Activated CD4-positive, alpha-beta T cell treated with anti-CD3 and anti-CD28 coated beads for 36 hours (primary cell): ENCODE measurements at regions of chr6 and their contacts with region 1.

Region 1: GRCh38 chr6:3118353-3119039 is at the start of gene BPHL:
- DNase-seq: peak; percentile 100
- ATAC-seq: peak; percentile 90
- H3K4me3 Mint-ChIP-seq: peak within 1 kb of the TSS; percentile 76
- H3K27ac Mint-ChIP-seq: peak within 1 kb of the TSS; percentile 60
- H3K4me1 Mint-ChIP-seq: peaks cover 22% of the 10 kb centered on the region
- H3K27me3 Mint-ChIP-seq: no peaks in the 10 kb centered on the region
- total RNA-seq, gene BPHL: 15.8 to 16.7 TPM

Region 2: DNA sequence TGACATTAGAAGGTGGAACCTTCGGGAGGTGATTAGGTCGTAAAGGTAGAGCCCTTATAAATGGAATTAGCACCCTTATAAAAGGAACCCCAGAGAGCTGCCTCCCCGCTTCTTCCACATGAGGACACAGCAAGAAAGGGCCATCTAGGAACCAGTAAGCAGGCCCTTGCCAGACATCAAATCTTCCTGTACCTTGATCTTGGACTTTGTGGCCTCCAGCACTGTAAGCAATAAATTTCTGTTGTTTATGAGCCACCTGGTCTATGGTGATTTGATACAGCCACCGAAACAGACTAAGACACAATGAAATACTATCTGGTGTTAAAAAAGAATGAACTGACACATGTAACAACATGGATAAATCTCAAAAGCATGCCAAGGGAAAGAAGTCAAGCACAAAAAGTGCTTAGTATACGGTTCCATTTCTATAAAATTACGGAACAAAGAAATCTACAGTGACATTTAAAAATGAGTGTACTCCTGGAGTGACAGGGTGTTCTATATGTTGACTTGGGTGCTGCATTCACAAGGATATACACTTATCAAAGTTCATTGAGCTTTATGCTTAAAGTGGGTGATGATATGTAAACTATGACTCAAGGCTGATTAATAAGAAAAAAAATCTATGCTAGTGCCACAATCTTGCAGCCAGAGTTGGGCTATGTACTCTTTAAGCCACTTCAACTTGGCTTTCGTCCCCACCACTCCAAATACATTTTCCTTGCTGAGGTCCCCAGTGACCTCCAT is 295.2 kb before region 1 on chr6:
- CTCF ChIA-PET with region 1: no interaction called
- POLR2A ChIA-PET with region 1: no interaction called
- intact Hi-C with region 1: no loop called
- DNase-seq: no peak
- ATAC-seq: peak; percentile 43
- H3K4me3 Mint-ChIP-seq: no peak overlapping the region
- H3K27ac Mint-ChIP-seq: no peak overlapping the region
- H3K4me1 Mint-ChIP-seq: peaks cover 29% of the 10 kb centered on the region
- H3K27me3 Mint-ChIP-seq: no peaks in the 10 kb centered on the region

Region 3: DNA sequence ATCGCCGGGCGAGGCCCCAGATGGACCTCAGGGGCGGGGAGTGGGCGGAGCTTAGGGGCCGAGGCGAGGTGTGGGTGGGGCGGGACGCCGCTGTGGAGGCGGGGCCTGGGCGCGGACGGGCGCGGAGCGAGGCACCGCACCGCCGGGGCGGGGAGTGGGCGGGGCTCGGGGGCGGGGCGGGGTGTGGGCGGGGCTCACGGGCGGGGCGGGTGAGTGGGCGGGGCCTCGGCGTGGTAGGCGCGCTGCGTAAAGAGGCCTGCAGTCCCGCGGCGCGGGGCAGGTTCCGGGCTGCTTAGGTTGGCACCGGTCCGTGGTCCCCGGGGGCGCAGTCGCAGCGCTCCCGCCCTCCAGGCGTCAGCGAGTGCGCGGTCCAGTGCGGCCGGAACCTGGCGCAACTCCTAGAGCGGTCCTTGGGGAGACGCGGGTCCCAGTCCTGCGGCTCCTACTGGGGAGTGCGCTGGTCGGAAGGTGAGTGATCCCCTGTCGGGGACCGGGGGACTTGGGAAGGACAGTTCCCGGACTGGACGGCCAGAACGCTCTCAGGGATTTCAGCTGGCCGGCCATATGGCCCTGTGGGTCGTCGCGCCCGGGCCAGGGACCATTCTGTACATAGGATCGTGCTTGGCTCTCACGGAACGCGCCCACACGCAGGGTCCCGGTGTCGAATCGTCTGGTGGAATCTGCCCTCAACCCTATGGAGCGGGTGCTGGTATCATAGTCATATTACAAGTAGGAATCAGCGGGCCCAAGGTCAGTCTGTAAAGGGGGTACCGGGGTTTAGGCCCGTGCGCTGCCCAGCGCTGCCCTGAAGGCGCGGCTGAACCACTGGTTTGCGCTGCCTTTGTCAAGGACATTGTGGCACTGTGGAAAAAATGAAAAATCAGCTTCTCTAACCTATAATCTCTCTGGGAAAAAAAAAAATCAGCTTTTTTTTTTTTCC is 118.6 kb before region 1 on chr6 and contains the start of gene NQO2:
- CTCF ChIA-PET with region 1: interaction called, 4 read pairs
- POLR2A ChIA-PET with region 1: no interaction called
- intact Hi-C with region 1: loop called (anchors 1 kb)
- DNase-seq: peak; percentile 96
- ATAC-seq: peak; percentile 80
- H3K4me3 Mint-ChIP-seq: peak within 1 kb of the TSS; percentile 83
- H3K27ac Mint-ChIP-seq: peak within 1 kb of the TSS; percentile 82
- H3K4me1 Mint-ChIP-seq: peaks cover 28% of the 10 kb centered on the region
- H3K27me3 Mint-ChIP-seq: no peaks in the 10 kb centered on the region
- total RNA-seq, gene NQO2: 40.7 to 44.2 TPM

Region 4: DNA sequence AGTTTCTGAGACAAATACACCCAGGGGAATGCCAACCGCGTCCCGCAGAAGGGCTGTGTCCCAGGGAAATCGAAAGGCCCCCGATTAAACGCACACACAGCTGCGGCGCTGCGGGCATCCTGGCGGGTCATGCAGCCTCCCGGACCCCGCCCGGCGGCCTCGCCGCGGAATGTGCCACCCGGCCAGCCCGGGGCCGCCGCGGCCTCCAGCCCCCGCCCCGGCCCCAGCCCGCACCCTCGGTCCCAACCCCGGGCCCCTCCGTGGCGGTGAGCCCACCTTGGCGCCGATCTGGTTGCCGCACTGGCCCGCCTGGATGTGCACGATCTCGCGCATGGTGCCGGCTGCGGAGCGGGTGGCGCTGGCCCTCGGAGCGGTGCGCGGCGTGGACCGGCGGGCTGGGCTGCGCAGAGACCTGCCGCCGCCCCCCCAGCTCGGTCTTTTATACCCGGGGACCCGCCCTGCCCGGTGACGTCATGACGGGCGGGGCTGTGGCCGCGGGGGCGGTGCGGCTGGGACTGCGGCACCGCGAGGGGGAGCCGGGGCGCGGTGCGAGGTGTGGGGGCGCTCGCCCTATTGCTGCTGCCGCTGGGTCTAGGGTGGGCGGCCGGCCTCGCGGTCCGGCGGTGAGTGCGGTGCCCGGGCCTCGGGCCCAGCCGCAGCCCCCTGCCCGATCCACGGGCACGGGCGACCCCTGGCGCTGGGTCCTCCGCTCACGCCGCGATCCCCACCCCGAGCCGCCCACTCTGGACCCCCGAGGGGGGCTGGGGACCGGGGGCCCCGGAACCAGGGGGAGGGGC is 38.8 kb after region 1 on chr6 and contains the start of gene TUBB2A:
- CTCF ChIA-PET with region 1: interaction called, 3 read pairs
- POLR2A ChIA-PET with region 1: no interaction called
- intact Hi-C with region 1: loop called (anchors 1 to 2 kb)
- DNase-seq: peak; percentile 87
- ATAC-seq: peak; percentile 68
- H3K4me3 Mint-ChIP-seq: peak within 1 kb of the TSS; percentile 74
- H3K27ac Mint-ChIP-seq: peak within 1 kb of the TSS; percentile 55
- H3K4me1 Mint-ChIP-seq: peaks cover 25% of the 10 kb centered on the region
- H3K27me3 Mint-ChIP-seq: peaks cover 20% of the 10 kb centered on the region
- total RNA-seq, gene TUBB2A: 1.7 to 1.8 TPM

Region 5: GRCh38 chr6:3209114-3210023 is 90.9 kb after region 1 on chr6:
- CTCF ChIA-PET with region 1: interaction called, 4 read pairs
- POLR2A ChIA-PET with region 1: interaction called, 7 read pairs
- intact Hi-C with region 1: loop called (anchors 1 kb)
- DNase-seq: peak; percentile 80
- ATAC-seq: peak; percentile 87
- H3K4me3 Mint-ChIP-seq: peak overlapping the region; percentile 32
- H3K27ac Mint-ChIP-seq: peak overlapping the region; percentile 86
- H3K4me1 Mint-ChIP-seq: peaks cover 28% of the 10 kb centered on the region
- H3K27me3 Mint-ChIP-seq: peaks cover 34% of the 10 kb centered on the region

Region 6: DNA sequence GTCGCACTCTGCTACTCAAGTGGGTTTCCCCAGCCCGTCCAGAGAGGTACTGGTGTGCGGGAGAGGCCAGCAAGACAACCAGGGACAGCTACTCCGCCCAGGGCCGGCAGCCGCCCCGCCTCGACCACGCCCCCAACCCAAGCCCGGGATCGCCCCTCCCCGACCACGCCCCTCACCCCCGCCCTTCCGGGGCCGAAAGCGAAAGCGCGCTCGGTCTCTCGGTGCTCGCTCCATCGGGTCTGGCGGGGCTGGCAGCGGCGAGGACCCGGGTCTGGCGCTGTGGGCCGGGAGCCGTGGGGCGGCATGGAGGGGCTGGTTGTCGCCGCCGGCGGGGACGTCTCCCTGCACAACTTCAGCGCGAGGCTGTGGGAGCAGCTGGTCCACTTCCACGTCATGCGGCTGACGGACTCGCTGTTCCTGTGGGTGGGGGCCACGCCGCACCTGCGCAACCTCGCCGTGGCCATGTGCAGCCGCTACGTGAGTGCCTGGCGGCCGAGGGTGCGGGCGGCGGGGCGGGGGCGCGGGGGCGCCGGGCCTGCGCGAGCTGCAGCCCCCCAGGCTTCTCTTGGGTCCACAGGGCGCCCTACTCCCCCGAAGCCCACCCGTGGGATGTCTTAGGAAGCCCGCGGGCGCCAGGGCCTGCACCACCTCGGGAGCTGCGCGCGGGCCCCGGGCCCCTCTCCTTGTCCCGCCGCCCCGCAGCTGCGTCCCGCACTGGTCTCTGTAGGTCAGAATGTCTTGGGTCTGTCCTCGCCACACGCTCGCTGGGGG is 140.4 kb after region 1 on chr6 and contains the start of gene PSMG4:
- CTCF ChIA-PET with region 1: interaction called, 3 read pairs
- POLR2A ChIA-PET with region 1: no interaction called
- intact Hi-C with region 1: loop called (anchors 1 kb)
- DNase-seq: peak; percentile 97
- ATAC-seq: peak; percentile 83
- H3K4me3 Mint-ChIP-seq: peak within 1 kb of the TSS; percentile 89
- H3K27ac Mint-ChIP-seq: peak within 1 kb of the TSS; percentile 92
- H3K4me1 Mint-ChIP-seq: peaks cover 35% of the 10 kb centered on the region
- H3K27me3 Mint-ChIP-seq: peaks cover 3% of the 10 kb centered on the region
- total RNA-seq, gene PSMG4: 22.2 to 23.2 TPM

Region 7: GRCh38 chr6:4135665-4136353 is 1017.3 kb after region 1 on chr6:
- CTCF ChIA-PET with region 1: no interaction called
- POLR2A ChIA-PET with region 1: no interaction called
- intact Hi-C with region 1: loop called in 1 of 2 experiments (anchors 1 kb)
- DNase-seq: peak; percentile 98
- ATAC-seq: peak; percentile 92
- H3K4me3 Mint-ChIP-seq: peak overlapping the region; percentile 79
- H3K27ac Mint-ChIP-seq: peak overlapping the region; percentile 85
- H3K4me1 Mint-ChIP-seq: peaks cover 46% of the 10 kb centered on the region
- H3K27me3 Mint-ChIP-seq: no peaks in the 10 kb centered on the region